Ascending aorta (tissue), 2 donors: ENCODE measurements at regions of chr9 and their contacts with region 1.

Region 1: GRCh38 chr9:134024828-134025605 is at the start of gene BRD3OS:
- DNase-seq: peak; percentile 86 to 98
- H3K4me3 ChIP-seq: peak within 1 kb of the TSS; percentile 70 to 97
- H3K27ac ChIP-seq: peak within 1 kb of the TSS; percentile 45 to 68
- H3K4me1 ChIP-seq: peaks cover 0 to 3% of the 10 kb centered on the region in 2 donors
- H3K27me3 ChIP-seq: no peaks in the 10 kb centered on the region
- CTCF ChIP-seq: no peak
- total RNA-seq, gene BRD3OS: 15.9 TPM

Region 2: DNA sequence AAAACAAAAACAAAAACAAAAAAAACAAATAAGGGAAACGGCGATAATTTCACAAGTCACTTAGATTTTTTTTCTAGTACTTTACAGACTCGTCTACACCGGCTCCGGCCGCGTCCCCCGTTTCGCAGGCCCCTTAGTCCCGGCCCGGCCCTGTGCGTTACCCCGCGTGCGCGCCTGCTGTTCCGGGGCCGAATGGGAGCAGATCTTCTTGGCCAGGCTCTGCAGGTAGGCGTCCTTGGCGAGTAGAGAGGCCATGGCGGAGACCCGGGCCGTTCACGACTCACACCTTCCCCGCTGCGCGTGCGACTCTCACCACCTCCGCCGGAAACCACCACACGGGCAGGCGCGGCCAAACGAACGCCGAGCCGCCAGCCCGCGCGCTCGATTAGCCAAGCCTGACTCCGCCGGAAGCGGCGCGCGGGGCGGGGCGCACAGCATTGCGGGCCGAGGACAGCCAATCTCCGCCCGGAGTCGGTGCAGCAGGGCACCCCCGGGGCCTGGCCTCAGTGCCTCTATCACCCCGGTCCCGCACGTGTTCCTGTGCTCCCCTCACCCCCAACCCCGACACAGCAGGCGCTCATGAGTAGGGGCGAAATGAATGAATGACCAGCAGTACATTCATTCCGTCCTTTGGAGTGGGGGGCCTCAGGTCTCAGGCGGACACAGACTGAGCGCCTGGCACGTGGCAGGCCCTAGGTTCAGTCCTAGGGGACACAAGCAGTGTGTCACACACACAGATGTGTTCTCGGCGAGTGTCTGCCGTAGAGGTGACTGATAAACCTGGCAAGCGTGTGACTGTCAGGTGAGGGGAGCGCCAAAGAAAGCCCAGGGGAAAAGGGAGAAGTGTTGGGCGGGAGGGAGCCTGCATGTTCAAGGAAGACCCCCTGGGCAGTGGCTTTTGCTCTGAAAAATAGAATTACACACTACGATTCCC is 688.9 kb before region 1 on chr9 and contains the start of gene SURF6:
- intact Hi-C with region 1: loop called (anchors 1 kb)
- DNase-seq: peak; percentile 46 to 93
- H3K4me3 ChIP-seq: peak within 1 kb of the TSS; percentile 80 to 91
- H3K27ac ChIP-seq: peak within 1 kb of the TSS; percentile 50 to 57
- H3K4me1 ChIP-seq: peaks cover 11 to 19% of the 10 kb centered on the region in 2 donors
- H3K27me3 ChIP-seq: no peaks in the 10 kb centered on the region
- CTCF ChIP-seq: no peak
- total RNA-seq, gene SURF6: 5.3 TPM

Region 3: GRCh38 chr9:133459476-133460404 is 565.3 kb before region 1 on chr9 and contains the start of gene CACFD1:
- intact Hi-C with region 1: loop called (anchors 1 kb)
- DNase-seq: peak; percentile 88 to 98
- H3K4me3 ChIP-seq: peak within 1 kb of the TSS; percentile 63 to 90
- H3K27ac ChIP-seq: peak within 1 kb of the TSS; percentile 81 to 91
- H3K4me1 ChIP-seq: peaks cover 0 to 12% of the 10 kb centered on the region in 2 donors
- H3K27me3 ChIP-seq: no peaks in the 10 kb centered on the region
- CTCF ChIP-seq: no peak
- total RNA-seq, gene CACFD1: 24.8 TPM

Region 4: GRCh38 chr9:134067904-134068743 is 43.1 kb after region 1 on chr9 and contains the start of gene BRD3:
- intact Hi-C with region 1: loop called (anchors 1 kb)
- DNase-seq: peak in 1 of 2 donors; percentile 91
- H3K4me3 ChIP-seq: peak within 1 kb of the TSS; percentile 98
- H3K27ac ChIP-seq: peak within 1 kb of the TSS; percentile 89 to 99
- H3K4me1 ChIP-seq: peaks cover 3 to 16% of the 10 kb centered on the region in 2 donors
- H3K27me3 ChIP-seq: no peaks in the 10 kb centered on the region
- CTCF ChIP-seq: no peak
- total RNA-seq, gene BRD3: 32.0 TPM

Region 5: GRCh38 chr9:134163353-134164196 is 138.6 kb after region 1 on chr9:
- intact Hi-C with region 1: loop called (anchors 1 kb)
- DNase-seq: peak in 1 of 2 donors; percentile 84
- H3K4me3 ChIP-seq: no peak overlapping the region
- H3K27ac ChIP-seq: no peak overlapping the region
- H3K4me1 ChIP-seq: peaks cover 8 to 16% of the 10 kb centered on the region in 2 donors
- H3K27me3 ChIP-seq: no peaks in the 10 kb centered on the region
- CTCF ChIP-seq: peak; percentile 43 to 57 (median 48)